ENCODE measurements at regions of chr15 and their contacts with region 1.

Region 1: DNA sequence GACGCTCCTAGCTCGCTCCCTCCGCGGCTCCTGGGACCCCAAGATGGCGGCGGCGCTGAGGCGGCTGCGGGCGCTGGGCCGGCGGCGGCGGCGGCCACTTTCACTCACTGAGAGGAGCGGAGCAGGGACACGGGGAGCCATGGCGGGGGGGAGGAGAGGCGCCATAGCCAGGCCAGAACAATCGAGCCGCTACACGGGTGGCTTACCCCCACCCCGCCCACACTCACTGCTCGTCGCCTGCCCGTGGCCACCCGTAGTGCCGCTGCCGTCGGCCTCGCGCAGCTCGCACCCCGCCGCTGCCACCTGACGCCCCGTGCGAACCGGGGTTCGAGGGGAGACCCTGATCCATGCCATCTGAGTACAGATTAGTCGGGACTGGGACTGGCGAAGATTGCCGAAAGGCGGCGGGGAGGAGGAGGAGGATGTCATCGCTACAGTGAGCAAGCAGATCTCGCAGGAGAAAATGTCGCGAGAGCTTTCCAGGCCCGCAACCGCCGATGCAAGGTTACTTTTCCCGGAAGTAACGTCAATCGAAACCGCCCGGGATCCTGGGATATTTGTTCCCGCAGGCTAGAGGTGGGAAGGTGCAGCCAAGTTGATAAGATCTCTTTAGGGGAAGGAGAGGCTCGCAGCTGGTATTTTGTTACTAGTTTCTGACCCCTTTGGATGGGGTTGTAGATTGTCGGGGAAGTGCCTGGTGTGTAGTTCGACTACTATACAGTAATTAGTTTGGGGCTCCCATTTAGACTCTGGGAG is at the start of gene INO80:
- DNase-seq: peak; percentile 86

Region 2: GRCh38 chr15:41105348-41106334 is 10.7 kb before region 1 on chr15:
- CTCF ChIA-PET with region 1: no interaction called
- POLR2A ChIA-PET with region 1: interaction called, 10 read pairs
- DNase-seq: no peak

Region 3: DNA sequence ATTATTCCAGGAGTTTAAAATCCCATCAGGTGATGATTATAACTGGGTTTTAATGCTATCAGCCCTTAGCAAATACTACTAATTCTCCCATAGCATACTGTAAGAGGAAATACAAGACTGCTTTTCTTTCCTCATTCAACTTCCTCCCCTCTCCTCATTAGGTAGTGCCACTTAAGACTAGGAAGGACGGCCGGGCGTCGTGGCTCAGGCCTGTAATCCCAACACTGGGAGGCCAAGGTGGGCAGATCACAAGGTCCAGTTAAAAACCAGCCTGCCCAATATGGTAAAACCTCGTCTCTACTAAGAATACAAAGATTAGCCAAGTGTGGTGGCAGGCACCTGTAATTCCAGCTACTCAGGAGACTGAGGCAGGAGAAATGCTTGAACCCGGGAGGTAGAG is 271.4 kb after region 1 on chr15:
- CTCF ChIA-PET with region 1: no interaction called
- POLR2A ChIA-PET with region 1: no interaction called
- DNase-seq: no peak

Measured in HEK293T (cell line).